ENCODE measurements at regions of chr3 and their contacts with region 1.

Region 1: DNA sequence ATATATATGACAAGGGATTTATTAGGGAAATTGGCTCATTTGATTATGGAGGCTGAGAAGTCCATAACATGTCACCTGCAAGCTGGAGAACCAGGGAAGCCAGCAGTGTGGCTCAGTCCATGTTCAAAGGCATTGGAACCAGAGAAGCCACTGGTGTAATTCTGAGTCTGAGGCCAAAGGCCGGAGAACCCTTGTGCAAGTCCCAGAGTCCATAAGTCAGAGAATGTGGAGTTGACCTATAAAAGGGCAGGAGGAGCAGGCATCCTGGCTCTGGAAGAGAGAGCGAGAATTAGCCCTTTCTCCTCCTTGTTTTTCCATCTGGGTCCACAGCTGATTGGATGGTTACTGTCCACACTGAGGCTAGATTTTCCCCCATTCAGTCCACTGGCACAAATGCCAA is 319.8 kb downstream of the IGSF11 start:
- DNase-seq: no peak
- H3K4me3 ChIP-seq: no peak overlapping the region
- H3K4me3 Mint-ChIP-seq: no peak overlapping the region
- H3K27ac Mint-ChIP-seq: no peak overlapping the region
- H3K4me1 ChIP-seq: peaks cover 17% of the 10 kb centered on the region
- H3K4me1 Mint-ChIP-seq: peaks cover 15% of the 10 kb centered on the region
- H3K27me3 ChIP-seq: no peaks in the 10 kb centered on the region
- H3K27me3 Mint-ChIP-seq: no peaks in the 10 kb centered on the region
- CTCF ChIP-seq: no peak

Region 2: GRCh38 chr3:118729546-118729945 is 14.7 kb after region 1 on chr3:
- CTCF ChIA-PET with region 1: no interaction called
- POLR2A ChIA-PET with region 1: no interaction called
- intact Hi-C with region 1: no loop called
- DNase-seq: no peak
- H3K4me3 ChIP-seq: no peak overlapping the region
- H3K4me3 Mint-ChIP-seq: no peak overlapping the region
- H3K27ac Mint-ChIP-seq: no peak overlapping the region
- H3K4me1 ChIP-seq: no peaks in the 10 kb centered on the region
- H3K4me1 Mint-ChIP-seq: no peaks in the 10 kb centered on the region
- H3K27me3 ChIP-seq: no peaks in the 10 kb centered on the region
- H3K27me3 Mint-ChIP-seq: no peaks in the 10 kb centered on the region
- CTCF ChIP-seq: no peak

Region 3: GRCh38 chr3:118760585-118761290 is 45.9 kb after region 1 on chr3:
- CTCF ChIA-PET with region 1: no interaction called
- POLR2A ChIA-PET with region 1: no interaction called
- intact Hi-C with region 1: loop called (anchors 5 kb)
- DNase-seq: peak; percentile 31 to 35
- H3K4me3 ChIP-seq: no peak overlapping the region
- H3K4me3 Mint-ChIP-seq: no peak overlapping the region
- H3K27ac Mint-ChIP-seq: no peak overlapping the region
- H3K4me1 ChIP-seq: no peaks in the 10 kb centered on the region
- H3K4me1 Mint-ChIP-seq: peaks cover 6% of the 10 kb centered on the region
- H3K27me3 ChIP-seq: no peaks in the 10 kb centered on the region
- H3K27me3 Mint-ChIP-seq: no peaks in the 10 kb centered on the region
- CTCF ChIP-seq: peak; percentile 26 to 55

Region 4: GRCh38 chr3:118808723-118809122 is 93.9 kb after region 1 on chr3:
- CTCF ChIA-PET with region 1: no interaction called
- POLR2A ChIA-PET with region 1: no interaction called
- intact Hi-C with region 1: loop called (anchors 1 kb)
- DNase-seq: peak; percentile 50 to 52
- H3K4me3 ChIP-seq: no peak overlapping the region
- H3K4me3 Mint-ChIP-seq: no peak overlapping the region
- H3K27ac Mint-ChIP-seq: no peak overlapping the region
- H3K4me1 ChIP-seq: no peaks in the 10 kb centered on the region
- H3K4me1 Mint-ChIP-seq: no peaks in the 10 kb centered on the region
- H3K27me3 ChIP-seq: no peaks in the 10 kb centered on the region
- H3K27me3 Mint-ChIP-seq: no peaks in the 10 kb centered on the region
- CTCF ChIP-seq: no peak

Region 5: DNA sequence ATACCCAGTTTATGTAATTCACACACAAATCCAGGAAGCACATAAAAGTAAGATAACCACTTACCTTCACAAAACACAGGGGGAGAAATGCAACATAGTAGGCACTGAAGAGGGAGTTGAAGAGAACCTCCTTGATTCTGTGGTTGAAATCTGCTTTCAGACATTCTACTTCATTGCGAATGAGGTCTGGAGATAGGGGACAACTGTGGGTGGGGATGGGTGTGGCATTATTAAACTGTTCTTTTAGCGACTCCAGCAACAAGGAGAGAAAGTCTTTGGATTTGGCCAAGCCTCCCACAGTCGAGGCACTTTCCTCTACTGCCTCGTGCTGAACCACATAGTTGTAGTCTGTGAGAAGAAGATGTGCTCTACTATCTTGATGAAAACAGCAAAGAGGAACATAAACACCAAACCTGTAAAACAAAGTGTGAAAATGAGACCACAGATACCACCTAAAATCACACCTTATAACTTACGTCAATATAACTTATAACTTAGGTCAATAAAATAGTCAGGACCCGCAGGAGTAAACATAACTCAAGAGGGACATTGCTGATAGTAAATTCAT is 723.0 kb after region 1 on chr3:
- CTCF ChIA-PET with region 1: no interaction called
- POLR2A ChIA-PET with region 1: no interaction called
- intact Hi-C with region 1: no loop called
- DNase-seq: no peak
- H3K4me3 ChIP-seq: no peak overlapping the region
- H3K4me3 Mint-ChIP-seq: no peak overlapping the region
- H3K27ac Mint-ChIP-seq: no peak overlapping the region
- H3K4me1 ChIP-seq: no peaks in the 10 kb centered on the region
- H3K4me1 Mint-ChIP-seq: no peaks in the 10 kb centered on the region
- H3K27me3 ChIP-seq: no peaks in the 10 kb centered on the region
- H3K27me3 Mint-ChIP-seq: no peaks in the 10 kb centered on the region
- CTCF ChIP-seq: no peak

Measured in Caco-2 (cell line).